Prostate gland (tissue), 2 donors: ENCODE measurements at regions of chr20 and their contacts with region 1.

Region 1: DNA sequence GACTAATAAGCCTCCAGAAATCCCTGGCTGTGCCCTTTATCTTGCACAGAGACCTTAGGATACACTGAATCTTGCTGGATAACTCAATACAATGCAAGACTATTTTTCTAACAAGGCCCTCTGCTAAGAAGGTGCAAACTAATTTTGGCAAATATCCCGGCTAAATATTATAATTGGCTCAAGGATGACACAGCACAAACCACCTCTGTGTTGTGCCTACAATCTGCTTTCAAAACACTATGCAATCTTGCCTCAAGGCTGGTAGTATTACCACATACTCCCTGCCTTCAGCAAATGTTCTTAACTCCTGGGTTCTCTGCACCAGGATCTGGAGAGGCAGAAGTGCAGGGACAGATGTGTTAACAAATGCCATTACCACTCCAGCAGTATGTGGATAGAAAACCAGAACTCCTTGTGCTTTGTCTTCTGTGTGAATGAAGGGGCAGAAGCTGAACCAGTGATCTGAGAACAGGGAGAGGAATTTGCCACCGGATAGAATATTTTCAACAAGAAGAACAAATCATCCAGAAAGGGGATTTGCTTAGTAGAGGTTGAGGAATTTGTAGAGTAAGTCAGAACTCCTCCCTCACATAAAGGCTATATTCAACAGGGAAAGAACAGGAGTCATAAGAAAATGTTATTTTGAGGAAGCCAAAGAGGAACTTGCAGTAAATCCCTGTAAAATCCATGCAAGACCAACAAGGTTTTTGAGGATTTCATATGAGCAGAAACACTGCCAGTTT is 74.1 kb upstream of the SLC4A11 start:
- DNase-seq: no peak
- H3K4me3 ChIP-seq: no peak overlapping the region
- H3K27ac ChIP-seq: peak overlapping the region; percentile 48 to 52
- H3K4me1 ChIP-seq: no peaks in the 10 kb centered on the region
- H3K27me3 ChIP-seq: no peaks in the 10 kb centered on the region
- CTCF ChIP-seq: no peak
- POLR2A ChIP-seq: no peak

Region 2: DNA sequence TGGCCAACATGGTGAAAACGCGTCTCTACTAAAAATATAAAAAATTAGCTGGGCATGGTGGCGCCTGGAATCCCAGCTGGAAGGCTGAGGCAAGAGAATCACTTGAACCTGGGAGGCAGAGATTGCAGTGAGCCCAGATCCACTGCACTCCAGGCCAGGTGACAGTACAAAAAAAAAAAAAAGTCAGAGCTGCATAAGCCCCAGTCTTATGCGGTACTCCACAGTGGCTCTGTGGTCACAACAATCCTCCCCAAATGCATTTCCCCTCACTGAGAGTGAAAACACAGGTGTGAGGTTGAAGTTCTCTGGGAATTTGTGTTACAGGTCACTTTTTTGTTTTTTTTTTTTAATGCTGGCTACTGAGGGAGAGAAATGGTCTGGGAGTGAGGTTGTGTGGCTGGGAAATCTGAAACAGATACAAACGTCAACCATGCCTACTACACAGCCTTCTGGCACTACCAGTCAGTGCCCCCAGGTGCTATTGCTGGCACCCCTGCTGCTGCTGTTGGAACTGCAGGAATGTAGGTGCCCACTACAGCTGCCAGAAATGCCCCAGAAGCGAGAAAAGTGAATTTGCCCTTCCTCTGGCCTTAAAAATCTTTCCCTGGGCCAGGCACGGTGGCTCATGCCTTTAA is 261.6 kb before region 1 on chr20:
- intact Hi-C with region 1: loop called (anchors 10 kb)
- DNase-seq: no peak
- H3K4me3 ChIP-seq: no peak overlapping the region
- H3K27ac ChIP-seq: no peak overlapping the region
- H3K4me1 ChIP-seq: peaks cover 7% of the 10 kb centered on the region
- H3K27me3 ChIP-seq: no peaks in the 10 kb centered on the region
- CTCF ChIP-seq: no peak
- POLR2A ChIP-seq: no peak

Region 3: DNA sequence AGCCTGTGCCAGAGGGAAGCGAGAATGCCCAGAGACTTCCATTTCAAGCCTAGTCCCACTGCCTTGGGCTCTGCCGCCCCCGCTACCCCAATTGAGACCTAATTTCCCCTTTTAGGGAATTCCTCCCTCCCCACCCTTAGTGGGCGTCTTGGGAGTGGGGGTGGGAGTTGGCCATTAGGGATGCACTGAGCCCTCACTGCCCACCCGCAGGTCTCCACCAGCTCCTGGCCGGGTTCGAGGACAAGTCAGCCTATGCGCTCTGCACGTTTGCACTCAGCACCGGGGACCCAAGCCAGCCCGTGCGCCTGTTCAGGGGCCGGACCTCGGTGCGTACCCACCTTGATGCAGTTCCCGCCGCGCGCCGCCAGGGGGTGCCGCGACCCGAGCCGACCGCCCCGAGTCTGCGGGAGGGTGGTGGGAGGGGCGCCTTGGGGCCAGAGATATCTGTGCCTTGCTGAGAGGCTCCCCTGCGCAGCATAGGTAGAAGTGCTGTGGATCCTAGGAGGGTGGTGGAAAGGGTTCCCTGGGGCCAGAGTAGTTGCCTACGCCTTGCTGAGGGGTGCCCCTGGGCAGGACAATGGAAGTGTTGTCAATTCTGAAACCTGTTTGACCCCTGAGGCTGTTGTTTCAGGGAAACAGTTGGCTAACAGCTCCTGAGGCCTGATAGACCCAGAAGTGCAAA is 94.7 kb before region 1 on chr20:
- intact Hi-C with region 1: loop called (anchors 10 kb)
- DNase-seq: peak; percentile 25
- H3K4me3 ChIP-seq: no peak overlapping the region
- H3K27ac ChIP-seq: peak overlapping the region in 1 of 2 donors; percentile 22
- H3K4me1 ChIP-seq: peaks cover 10% of the 10 kb centered on the region
- H3K27me3 ChIP-seq: no peaks in the 10 kb centered on the region
- CTCF ChIP-seq: peak; percentile 84 to 91 (median 88)
- POLR2A ChIP-seq: no peak